ENCODE measurements at regions of chr3 and their contacts with region 1.

Region 1: GRCh38 chr3:137105277-137105977 is 147.6 kb downstream of the IL20RB start:
- H3K4me3 ChIP-seq: no peak overlapping the region
- H3K27ac ChIP-seq: no peak overlapping the region
- H3K4me1 ChIP-seq: no peaks in the 10 kb centered on the region
- CTCF ChIP-seq: peak; percentile 29; the same call in 1 of the 2 replicates

Region 2: DNA sequence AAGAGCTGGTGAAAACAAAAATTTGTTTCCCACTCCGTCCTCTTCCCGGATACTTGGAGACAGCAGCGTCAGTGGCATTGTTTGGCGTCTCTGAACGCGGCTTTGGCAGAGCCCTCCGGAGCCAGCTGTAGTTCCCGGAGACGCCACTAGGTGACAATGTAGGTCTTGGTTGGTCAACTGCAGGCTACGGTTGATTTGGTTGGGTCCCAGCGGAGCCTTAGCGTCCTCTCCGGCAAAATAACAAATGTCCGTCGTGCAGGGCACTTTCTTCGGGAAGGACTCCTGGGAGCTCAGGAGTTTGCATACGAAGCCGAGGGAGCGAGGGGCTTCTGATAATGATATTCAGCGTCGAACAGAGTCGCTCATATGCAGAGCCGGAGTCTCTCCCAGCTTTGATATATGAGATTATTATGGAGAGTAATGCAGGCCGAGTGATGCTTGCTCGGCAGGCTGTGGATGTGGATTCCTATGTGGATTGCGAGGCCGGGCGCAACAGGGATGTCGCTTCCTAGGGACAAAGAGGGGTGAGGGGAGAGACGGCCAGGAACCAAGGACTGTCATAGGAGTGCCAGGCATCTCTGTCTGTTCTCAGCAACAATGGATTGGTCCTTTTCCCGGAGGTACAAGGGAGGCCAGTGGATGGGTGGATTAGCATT is 72.8 kb before region 1 on chr3:
- CTCF ChIA-PET with region 1: interaction called, 10 read pairs
- POLR2A ChIA-PET with region 1: no interaction called
- H3K4me3 ChIP-seq: peak overlapping the region; percentile 24
- H3K27ac ChIP-seq: no peak overlapping the region
- H3K4me1 ChIP-seq: no peaks in the 10 kb centered on the region
- CTCF ChIP-seq: peak; percentile 61; the same call in 1 of the 2 replicates

Region 3: GRCh38 chr3:137692803-137693431 is 587.5 kb after region 1 on chr3:
- CTCF ChIA-PET with region 1: interaction called, 10 read pairs
- POLR2A ChIA-PET with region 1: no interaction called
- H3K4me3 ChIP-seq: no peak overlapping the region
- H3K27ac ChIP-seq: no peak overlapping the region
- H3K4me1 ChIP-seq: no peaks in the 10 kb centered on the region
- CTCF ChIP-seq: no peak

Region 4: GRCh38 chr3:137946345-137946973 is 841.0 kb after region 1 on chr3:
- CTCF ChIA-PET with region 1: interaction called, 10 read pairs
- POLR2A ChIA-PET with region 1: interaction called, 6 read pairs
- H3K4me3 ChIP-seq: no peak overlapping the region
- H3K27ac ChIP-seq: no peak overlapping the region
- H3K4me1 ChIP-seq: no peaks in the 10 kb centered on the region
- CTCF ChIP-seq: no peak

Measured in HEK293 (cell line).